ENCODE measurements at regions of chr16 and their contacts with region 1.

Region 1: DNA sequence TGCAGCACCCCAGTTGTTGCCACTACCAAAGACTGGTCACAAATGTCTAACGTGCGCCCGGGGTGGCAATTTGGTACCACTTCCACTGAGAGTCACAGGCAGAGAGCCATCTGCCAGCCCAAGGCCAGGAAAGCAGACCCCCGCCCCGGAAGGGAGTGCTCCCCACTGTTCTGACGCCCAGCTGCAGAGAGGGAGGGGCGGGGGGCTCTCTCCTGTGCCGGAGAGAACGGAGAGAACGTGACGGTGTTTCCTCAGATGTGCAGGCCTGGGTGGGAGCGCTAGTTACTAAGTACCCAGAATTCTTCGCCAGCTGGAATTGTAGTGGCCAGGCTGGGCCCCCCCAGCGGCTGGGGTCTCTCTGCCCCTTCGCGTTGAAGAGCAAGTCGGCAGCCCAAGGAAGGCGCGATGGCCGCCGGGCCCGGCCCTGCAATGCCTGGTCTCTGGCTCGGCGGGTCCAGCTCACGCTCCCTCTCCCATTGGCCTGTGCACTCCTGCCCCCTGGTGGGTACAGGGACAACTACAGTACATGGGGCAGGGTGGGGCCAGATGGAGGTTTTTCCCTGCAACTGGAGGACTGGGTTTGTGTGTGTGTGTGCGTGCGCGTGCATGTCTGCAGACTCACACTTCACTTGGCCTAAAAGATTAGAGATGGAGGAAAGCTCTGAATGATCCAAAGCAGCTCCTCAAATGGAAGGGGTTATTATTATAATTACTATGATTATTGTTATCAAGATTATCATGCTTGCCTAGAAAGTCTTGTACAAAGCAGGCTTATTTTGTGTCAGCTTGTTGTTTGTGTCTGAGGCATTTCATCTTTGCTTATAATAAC is 107.1 kb downstream of the AMFR start:
- DNase-seq: peak; percentile 74 to 85 (median 81)
- ATAC-seq: peak; percentile 96 to 99 (median 97)
- H3K4me3 ChIP-seq: no peak overlapping the region
- H3K27ac ChIP-seq: no peak overlapping the region
- H3K4me1 ChIP-seq: no peaks in the 10 kb centered on the region
- H3K27me3 ChIP-seq: no peaks in the 10 kb centered on the region
- CTCF ChIP-seq: peak; percentile 79 to 94 (median 92)
- POLR2A ChIP-seq: no peak

Region 2: GRCh38 chr16:55949518-55949917 is 368.7 kb before region 1 on chr16:
- intact Hi-C with region 1: loop called in 1 of 2 experiments (anchors 5 kb)
- DNase-seq: no peak
- ATAC-seq: no peak
- H3K4me3 ChIP-seq: no peak overlapping the region
- H3K27ac ChIP-seq: no peak overlapping the region
- H3K4me1 ChIP-seq: no peaks in the 10 kb centered on the region
- H3K27me3 ChIP-seq: no peaks in the 10 kb centered on the region
- CTCF ChIP-seq: no peak
- POLR2A ChIP-seq: no peak

Region 3: GRCh38 chr16:56041686-56042085 is 276.5 kb before region 1 on chr16:
- intact Hi-C with region 1: loop called (anchors 5 to 10 kb)
- DNase-seq: peak; percentile 38 to 62 (median 57)
- ATAC-seq: peak; percentile 96 to 100 (median 98)
- H3K4me3 ChIP-seq: no peak overlapping the region
- H3K27ac ChIP-seq: no peak overlapping the region
- H3K4me1 ChIP-seq: no peaks in the 10 kb centered on the region
- H3K27me3 ChIP-seq: no peaks in the 10 kb centered on the region
- CTCF ChIP-seq: peak; percentile 52 to 68 (median 66)
- POLR2A ChIP-seq: no peak

Region 4: GRCh38 chr16:56203052-56203451 is 115.2 kb before region 1 on chr16:
- intact Hi-C with region 1: no loop called
- DNase-seq: peak in 1 of 3 donors; percentile 39
- ATAC-seq: peak; percentile 71 to 92 (median 82)
- H3K4me3 ChIP-seq: no peak overlapping the region
- H3K27ac ChIP-seq: no peak overlapping the region
- H3K4me1 ChIP-seq: peaks cover 0 to 24% (median 14%) of the 10 kb centered on the region in 4 donors
- H3K27me3 ChIP-seq: no peaks in the 10 kb centered on the region
- CTCF ChIP-seq: peak; percentile 30 to 57 (median 40)
- POLR2A ChIP-seq: no peak

Measured in right lobe of liver (tissue), 6 donors.